Ascending aorta (tissue), 2 donors: ENCODE measurements at regions of chr10 and their contacts with region 1.

Region 1: GRCh38 chr10:29998142-29998808 is 61.1 kb downstream of the JCAD start:
- DNase-seq: peak in 1 of 2 donors; percentile 81
- H3K4me3 ChIP-seq: no peak overlapping the region
- H3K27ac ChIP-seq: no peak overlapping the region
- H3K4me1 ChIP-seq: peaks cover 20 to 35% of the 10 kb centered on the region in 2 donors
- H3K27me3 ChIP-seq: no peaks in the 10 kb centered on the region
- CTCF ChIP-seq: peak; percentile 94 to 97 (median 96)

Region 2: DNA sequence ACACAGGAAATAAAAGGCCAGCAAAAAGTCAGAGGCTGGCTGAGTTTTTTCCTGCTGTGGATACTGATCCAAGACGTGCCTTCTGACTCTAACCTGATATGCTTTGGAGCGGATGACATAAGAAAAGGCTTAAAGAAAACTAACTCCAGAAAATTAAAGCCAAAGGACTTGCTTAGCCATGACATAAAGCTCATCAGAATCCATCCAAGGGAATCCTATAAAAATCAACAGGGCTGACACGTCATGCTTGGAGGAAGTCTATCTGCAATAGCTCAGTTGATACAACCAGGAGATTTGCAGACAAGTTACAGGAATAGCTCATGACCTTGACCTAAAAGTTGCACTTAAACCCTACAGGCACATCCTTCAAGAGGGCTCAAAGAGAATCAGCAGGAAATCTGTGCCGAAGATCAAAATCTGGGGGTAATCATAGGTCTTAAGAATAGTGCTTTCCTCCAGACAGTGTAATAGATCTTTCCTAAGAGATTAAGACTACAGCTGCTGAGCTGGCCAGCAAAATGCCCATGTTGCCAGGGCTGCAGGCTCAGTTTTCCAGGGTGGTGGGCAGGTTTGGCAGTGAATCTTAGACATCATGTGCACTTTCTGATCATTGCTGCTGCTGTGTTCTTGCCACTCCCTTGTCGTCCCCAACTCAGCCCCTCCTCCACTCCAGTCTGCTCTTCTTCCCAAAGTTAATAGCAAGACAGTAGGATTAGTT is 252.0 kb before region 1 on chr10:
- intact Hi-C with region 1: no loop called
- DNase-seq: no peak
- H3K4me3 ChIP-seq: no peak overlapping the region
- H3K27ac ChIP-seq: peak overlapping the region; percentile 54 to 67
- H3K4me1 ChIP-seq: peaks cover 5 to 21% of the 10 kb centered on the region in 2 donors
- H3K27me3 ChIP-seq: no peaks in the 10 kb centered on the region
- CTCF ChIP-seq: no peak

Region 3: GRCh38 chr10:29811751-29812449 is 186.4 kb before region 1 on chr10:
- intact Hi-C with region 1: loop called (anchors 5 kb)
- DNase-seq: peak; percentile 32 to 90
- H3K4me3 ChIP-seq: no peak overlapping the region
- H3K27ac ChIP-seq: peak overlapping the region; percentile 86 to 93
- H3K4me1 ChIP-seq: peaks cover 3 to 24% of the 10 kb centered on the region in 2 donors
- H3K27me3 ChIP-seq: no peaks in the 10 kb centered on the region
- CTCF ChIP-seq: no peak

Region 4: GRCh38 chr10:29881336-29881771 is 116.9 kb before region 1 on chr10:
- intact Hi-C with region 1: loop called (anchors 5 kb)
- DNase-seq: peak in 1 of 2 donors; percentile 79
- H3K4me3 ChIP-seq: no peak overlapping the region
- H3K27ac ChIP-seq: peak overlapping the region; percentile 95 to 98
- H3K4me1 ChIP-seq: peaks cover 18 to 55% of the 10 kb centered on the region in 2 donors
- H3K27me3 ChIP-seq: no peaks in the 10 kb centered on the region
- CTCF ChIP-seq: no peak

Region 5: DNA sequence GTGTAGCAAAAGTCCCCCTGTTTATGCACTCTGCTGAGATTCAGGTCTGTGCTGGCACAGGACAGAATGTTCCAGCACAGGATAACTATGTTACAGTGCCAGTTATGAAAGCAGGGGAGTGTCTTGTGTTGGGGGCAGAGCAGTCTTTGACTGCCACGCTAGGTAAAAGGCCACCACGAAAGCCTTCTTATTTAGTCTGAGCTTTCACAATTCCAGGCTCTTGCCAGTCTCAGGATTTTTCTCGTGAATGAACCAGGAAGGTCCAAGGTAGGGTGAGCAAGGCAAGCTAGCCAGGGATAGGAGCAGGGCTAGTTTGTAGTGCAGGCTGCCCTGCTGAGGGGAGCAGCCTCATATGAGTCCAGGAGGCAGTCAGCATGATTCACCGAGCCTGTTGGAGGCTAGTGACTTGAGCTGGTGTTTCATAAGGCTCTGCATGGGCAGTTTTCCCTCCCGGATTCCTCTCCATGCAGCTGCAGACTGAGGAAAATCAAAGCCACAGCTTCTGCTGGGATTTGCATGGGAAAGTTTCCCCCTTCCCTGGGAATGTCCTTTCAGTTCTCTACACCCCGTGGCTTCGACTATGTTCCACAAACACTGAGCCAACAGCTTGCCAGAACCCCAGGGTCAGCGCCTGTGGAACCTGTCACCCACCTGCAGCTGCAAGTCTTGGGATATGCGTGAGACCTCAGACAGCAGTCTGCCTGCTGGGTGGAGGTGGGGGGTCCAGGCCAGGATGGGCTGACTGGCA is 51.1 kb before region 1 on chr10:
- intact Hi-C with region 1: loop called (anchors 1 kb)
- DNase-seq: peak; percentile 55 to 92
- H3K4me3 ChIP-seq: peak overlapping the region in 1 of 2 donors; percentile 39
- H3K27ac ChIP-seq: peak overlapping the region; percentile 85 to 90
- H3K4me1 ChIP-seq: peaks cover 17 to 42% of the 10 kb centered on the region in 2 donors
- H3K27me3 ChIP-seq: no peaks in the 10 kb centered on the region
- CTCF ChIP-seq: no peak

Region 6: GRCh38 chr10:30070001-30070685 is 71.9 kb after region 1 on chr10:
- intact Hi-C with region 1: no loop called
- DNase-seq: no peak
- H3K4me3 ChIP-seq: no peak overlapping the region
- H3K27ac ChIP-seq: no peak overlapping the region
- H3K4me1 ChIP-seq: no peaks in the 10 kb centered on the region
- H3K27me3 ChIP-seq: no peaks in the 10 kb centered on the region
- CTCF ChIP-seq: no peak